ENCODE measurements at regions of chr12 and their contacts with region 1.

Region 1: DNA sequence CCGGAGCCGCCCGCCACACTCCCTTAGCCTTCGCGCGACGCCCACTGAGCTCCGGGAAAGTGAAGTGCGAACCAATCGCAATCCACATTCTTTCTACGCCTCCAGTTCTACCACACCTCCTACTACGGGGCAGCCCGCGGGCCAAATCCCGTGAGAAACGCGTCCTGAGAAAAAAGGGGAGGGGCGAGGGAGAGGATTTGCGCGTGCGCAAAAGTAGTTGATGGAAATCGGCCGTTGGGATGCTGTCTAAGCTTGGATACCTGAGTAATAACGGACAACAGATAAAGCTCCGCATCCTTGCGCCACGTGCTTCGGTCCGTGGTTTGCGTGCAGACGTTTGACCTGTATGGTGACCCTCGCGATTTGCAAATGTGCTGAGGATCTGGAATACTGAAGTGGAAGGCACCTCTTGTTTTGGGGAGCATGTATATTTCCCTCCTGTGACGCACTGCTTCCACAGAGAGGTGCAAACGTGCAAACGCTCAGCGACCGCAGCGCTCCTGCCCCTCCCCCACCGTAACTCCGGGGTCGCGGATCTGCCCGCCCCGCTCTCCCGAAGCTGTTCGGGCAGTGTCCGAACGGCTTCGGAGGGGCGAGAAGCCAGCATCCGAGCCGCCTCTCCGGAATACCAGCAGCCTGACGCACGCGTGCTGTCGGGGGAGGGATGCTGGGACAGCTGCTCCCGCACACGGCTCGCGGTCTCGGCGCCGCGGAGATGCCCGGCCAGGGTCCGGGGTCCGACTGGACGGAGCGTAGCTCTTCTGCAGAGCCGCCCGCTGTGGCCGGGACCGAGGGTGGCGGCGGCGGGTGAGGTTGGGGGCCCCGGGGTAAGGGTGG is at the starts of genes FAM216A and GPN3:
- DNase-seq: peak; percentile 96 to 98
- H3K4me3 ChIP-seq: peak within 1 kb of the TSS; percentile 66 to 74
- H3K27ac ChIP-seq: peak within 1 kb of the TSS; percentile 90 to 93
- H3K4me1 ChIP-seq: peaks cover 0 to 22% (median 15%) of the 10 kb centered on the region in 4 donors
- H3K27me3 ChIP-seq: no peaks in the 10 kb centered on the region
- CTCF ChIP-seq: no peak

Region 2: GRCh38 chr12:110431957-110432587 is 36.4 kb before region 1 on chr12:
- intact Hi-C with region 1: no loop called
- DNase-seq: no peak
- H3K4me3 ChIP-seq: peak overlapping the region; percentile 57 to 64
- H3K27ac ChIP-seq: peak overlapping the region; percentile 52 to 60
- H3K4me1 ChIP-seq: peaks cover 0 to 4% (median 0%) of the 10 kb centered on the region in 4 donors
- H3K27me3 ChIP-seq: no peaks in the 10 kb centered on the region
- CTCF ChIP-seq: no peak

Region 3: GRCh38 chr12:110501752-110502738 is 33.6 kb after region 1 on chr12 and contains the starts of genes RAD9B and VPS29:
- intact Hi-C with region 1: loop called (anchors 5 kb)
- DNase-seq: peak; percentile 98 to 99
- H3K4me3 ChIP-seq: peak within 1 kb of the TSS; percentile 86 to 97
- H3K27ac ChIP-seq: peak within 1 kb of the TSS; percentile 93 to 95
- H3K4me1 ChIP-seq: peaks cover 0 to 38% (median 22%) of the 10 kb centered on the region in 4 donors
- H3K27me3 ChIP-seq: no peaks in the 10 kb centered on the region
- CTCF ChIP-seq: no peak

Region 4: DNA sequence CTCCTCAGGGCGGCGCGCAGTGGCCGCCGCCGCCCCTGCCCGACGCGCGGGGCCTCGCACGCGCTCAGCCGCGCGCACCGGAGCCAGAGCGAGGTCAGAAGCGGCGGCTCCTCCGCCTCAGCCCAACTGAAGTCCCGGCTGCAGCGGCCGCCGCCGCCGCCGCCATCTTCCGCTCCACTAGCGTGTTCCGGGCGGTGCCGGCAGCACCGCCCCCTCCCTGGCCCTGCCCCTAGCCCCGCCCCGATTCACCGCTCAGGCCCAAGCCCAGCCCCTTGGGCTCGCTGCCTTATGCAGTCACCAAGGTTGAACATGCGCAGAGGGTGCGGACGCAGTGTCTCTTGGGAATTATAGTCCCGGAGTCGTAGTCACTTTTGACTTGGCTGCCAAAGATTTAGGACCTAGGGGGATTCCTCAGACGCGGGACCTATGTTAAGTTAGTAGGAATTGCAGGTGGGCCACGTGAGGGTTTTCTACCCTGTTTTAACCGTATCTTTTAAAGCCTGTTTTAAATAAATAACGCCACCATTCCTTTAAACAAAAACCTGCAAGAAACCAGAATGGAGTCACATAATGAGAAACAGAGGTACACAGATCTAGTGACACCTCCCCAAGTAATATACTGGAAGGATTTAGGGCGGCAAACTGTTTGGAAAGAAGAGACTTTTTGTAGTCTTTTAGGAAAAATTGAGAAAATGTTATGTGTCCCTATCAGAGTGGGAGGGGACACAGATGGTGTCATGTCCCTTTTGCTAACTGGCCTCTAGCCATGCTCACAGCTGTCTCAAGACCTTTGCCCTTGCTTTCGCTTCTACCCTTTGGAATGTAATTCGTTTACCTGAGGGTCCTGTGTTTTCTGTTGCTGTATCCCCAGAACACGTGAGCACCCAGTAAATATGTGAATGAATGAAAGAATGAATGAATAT is 115.0 kb after region 1 on chr12 and contains the start of gene PPTC7:
- intact Hi-C with region 1: loop called (anchors 10 kb)
- DNase-seq: peak; percentile 97 to 98
- H3K4me3 ChIP-seq: peak within 1 kb of the TSS; percentile 68 to 72
- H3K27ac ChIP-seq: peak within 1 kb of the TSS; percentile 83 to 84
- H3K4me1 ChIP-seq: peaks cover 0 to 57% (median 42%) of the 10 kb centered on the region in 4 donors
- H3K27me3 ChIP-seq: no peaks in the 10 kb centered on the region
- CTCF ChIP-seq: no peak

Region 5: DNA sequence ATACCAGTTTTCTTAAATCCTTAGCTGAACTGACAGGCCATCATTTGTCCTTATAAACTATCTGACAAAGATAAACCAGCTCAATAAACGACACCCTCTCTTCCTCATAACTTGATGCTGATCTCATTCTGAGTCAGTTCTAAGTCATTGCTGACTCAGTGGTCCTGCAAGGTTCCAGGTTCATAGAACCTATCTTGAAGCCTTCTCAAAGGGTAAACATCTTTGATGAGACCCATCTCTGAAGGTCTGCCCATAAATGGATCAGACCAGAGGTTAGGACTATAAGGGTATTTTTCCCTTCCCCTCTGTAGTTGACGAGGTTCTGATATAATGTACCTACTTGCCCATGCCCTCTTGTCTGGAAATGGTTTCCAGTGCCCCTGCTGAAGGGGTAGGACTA is 1628.2 kb after region 1 on chr12:
- intact Hi-C with region 1: loop called (anchors 10 kb)
- DNase-seq: no peak
- H3K4me3 ChIP-seq: no peak overlapping the region
- H3K27ac ChIP-seq: no peak overlapping the region
- H3K4me1 ChIP-seq: peaks cover 0 to 11% (median 0%) of the 10 kb centered on the region in 4 donors
- H3K27me3 ChIP-seq: no peaks in the 10 kb centered on the region
- CTCF ChIP-seq: no peak